Activated CD4-positive, alpha-beta T cell treated with anti-CD3 and anti-CD28 coated beads for 36 hours (primary cell): ENCODE measurements at regions of chr16 and their contacts with region 1.

Region 1: GRCh38 chr16:69880640-69881133 is 70.4 kb upstream of the CLEC18A start:
- DNase-seq: no peak
- ATAC-seq: no peak
- H3K4me3 Mint-ChIP-seq: no peak overlapping the region
- H3K27ac Mint-ChIP-seq: no peak overlapping the region
- H3K4me1 Mint-ChIP-seq: no peaks in the 10 kb centered on the region
- H3K27me3 Mint-ChIP-seq: no peaks in the 10 kb centered on the region

Region 2: DNA sequence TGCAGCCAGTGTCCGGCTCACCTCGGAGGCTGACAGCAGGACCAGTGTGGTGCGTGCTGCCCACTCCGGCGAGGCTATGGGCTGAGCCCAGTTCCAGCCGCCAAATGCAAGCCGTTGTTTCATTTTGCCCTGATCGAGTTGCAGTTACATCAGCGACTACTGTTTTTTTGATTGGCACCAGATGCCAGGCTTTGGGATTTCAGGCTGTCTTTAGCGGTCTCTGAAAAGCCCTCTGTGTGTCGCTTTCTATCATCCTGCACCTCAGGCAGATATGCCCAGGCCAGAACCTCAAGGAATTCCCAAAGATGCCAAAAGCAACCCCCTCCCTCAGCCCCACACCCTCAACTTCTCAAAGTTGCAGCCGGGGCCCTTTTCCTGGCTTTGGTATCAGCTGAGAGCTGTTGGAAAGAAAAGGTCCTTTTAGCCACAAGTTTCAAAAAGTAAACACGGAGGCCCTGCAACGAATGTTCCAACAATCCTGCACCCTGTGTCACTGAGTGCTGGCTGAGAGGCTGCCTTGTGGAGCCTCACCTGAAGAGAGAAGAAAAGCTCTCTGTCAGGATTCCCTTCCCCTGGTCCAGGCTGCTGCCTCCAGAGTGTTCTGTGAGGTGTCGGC is 59.7 kb before region 1 on chr16:
- CTCF ChIA-PET with region 1: no interaction called
- POLR2A ChIA-PET with region 1: interaction called, 10 read pairs
- intact Hi-C with region 1: no loop called
- DNase-seq: no peak
- ATAC-seq: no peak
- H3K4me3 Mint-ChIP-seq: no peak overlapping the region
- H3K27ac Mint-ChIP-seq: no peak overlapping the region
- H3K4me1 Mint-ChIP-seq: no peaks in the 10 kb centered on the region
- H3K27me3 Mint-ChIP-seq: no peaks in the 10 kb centered on the region

Region 3: GRCh38 chr16:70364399-70364798 is 483.7 kb after region 1 on chr16:
- CTCF ChIA-PET with region 1: no interaction called
- POLR2A ChIA-PET with region 1: no interaction called
- intact Hi-C with region 1: no loop called
- DNase-seq: peak; percentile 8
- ATAC-seq: peak; percentile 30
- H3K4me3 Mint-ChIP-seq: no peak overlapping the region
- H3K27ac Mint-ChIP-seq: peak overlapping the region; percentile 55
- H3K4me1 Mint-ChIP-seq: no peaks in the 10 kb centered on the region
- H3K27me3 Mint-ChIP-seq: no peaks in the 10 kb centered on the region